Activated CD4-positive, alpha-beta memory T cell treated with anti-CD3 and anti-CD28 coated beads for 36 hours (primary cell): ENCODE measurements at regions of chr4 and their contacts with region 1.

Region 1: GRCh38 chr4:183074296-183074990 is 24.6 kb upstream of the WWC2 start:
- DNase-seq: no peak
- H3K4me3 Mint-ChIP-seq: no peak overlapping the region
- H3K27ac Mint-ChIP-seq: no peak overlapping the region
- H3K4me1 Mint-ChIP-seq: no peaks in the 10 kb centered on the region
- H3K27me3 Mint-ChIP-seq: no peaks in the 10 kb centered on the region

Region 2: GRCh38 chr4:183059797-183060196 is 14.6 kb before region 1 on chr4:
- CTCF ChIA-PET with region 1: interaction called, 10 read pairs
- POLR2A ChIA-PET with region 1: no interaction called
- intact Hi-C with region 1: no loop called
- DNase-seq: no peak
- H3K4me3 Mint-ChIP-seq: no peak overlapping the region
- H3K27ac Mint-ChIP-seq: no peak overlapping the region
- H3K4me1 Mint-ChIP-seq: no peaks in the 10 kb centered on the region
- H3K27me3 Mint-ChIP-seq: peaks cover 13% of the 10 kb centered on the region

Region 3: GRCh38 chr4:183249857-183250256 is 175.4 kb after region 1 on chr4:
- CTCF ChIA-PET with region 1: interaction called, 183 read pairs
- POLR2A ChIA-PET with region 1: no interaction called
- intact Hi-C with region 1: loop called (anchors 1 kb)
- DNase-seq: peak; percentile 23
- H3K4me3 Mint-ChIP-seq: no peak overlapping the region
- H3K27ac Mint-ChIP-seq: no peak overlapping the region
- H3K4me1 Mint-ChIP-seq: no peaks in the 10 kb centered on the region
- H3K27me3 Mint-ChIP-seq: no peaks in the 10 kb centered on the region

Region 4: DNA sequence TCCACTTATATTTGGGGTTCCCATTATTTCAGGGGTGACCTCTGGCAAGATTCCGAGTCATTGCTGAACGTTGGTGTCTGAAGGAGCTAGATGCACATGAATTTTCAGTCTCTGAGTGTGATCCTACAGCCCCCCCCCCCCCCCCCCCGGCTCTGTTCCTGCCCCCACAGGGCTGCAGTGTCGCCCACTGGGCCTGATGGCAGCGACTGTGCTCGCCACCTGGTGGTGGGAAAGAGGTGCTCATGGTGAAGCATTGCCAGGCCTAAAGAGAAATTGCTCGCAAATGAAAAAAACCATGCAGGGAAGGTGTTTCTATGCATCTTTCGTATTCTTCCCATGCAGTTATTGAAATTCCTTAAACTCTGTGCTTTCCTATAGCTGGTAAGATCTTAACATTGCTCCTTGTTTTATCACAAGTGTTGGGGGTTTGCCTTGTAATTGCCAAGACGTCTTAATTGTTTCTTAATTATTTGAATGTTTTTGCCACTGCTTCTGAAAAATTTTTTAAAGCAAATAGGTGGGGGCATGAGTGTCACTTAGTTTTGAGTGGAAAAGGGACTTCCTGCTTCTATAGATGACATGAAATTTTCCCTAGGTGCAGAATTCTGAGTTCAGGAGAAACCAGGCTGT is 182.4 kb after region 1 on chr4:
- CTCF ChIA-PET with region 1: interaction called, 183 read pairs
- POLR2A ChIA-PET with region 1: interaction called, 3 read pairs
- intact Hi-C with region 1: loop called (anchors 1 kb)
- DNase-seq: peak; percentile 54
- H3K4me3 Mint-ChIP-seq: no peak overlapping the region
- H3K27ac Mint-ChIP-seq: no peak overlapping the region
- H3K4me1 Mint-ChIP-seq: no peaks in the 10 kb centered on the region
- H3K27me3 Mint-ChIP-seq: no peaks in the 10 kb centered on the region